ENCODE measurements at regions of chr7 and their contacts with region 1.

Region 1: DNA sequence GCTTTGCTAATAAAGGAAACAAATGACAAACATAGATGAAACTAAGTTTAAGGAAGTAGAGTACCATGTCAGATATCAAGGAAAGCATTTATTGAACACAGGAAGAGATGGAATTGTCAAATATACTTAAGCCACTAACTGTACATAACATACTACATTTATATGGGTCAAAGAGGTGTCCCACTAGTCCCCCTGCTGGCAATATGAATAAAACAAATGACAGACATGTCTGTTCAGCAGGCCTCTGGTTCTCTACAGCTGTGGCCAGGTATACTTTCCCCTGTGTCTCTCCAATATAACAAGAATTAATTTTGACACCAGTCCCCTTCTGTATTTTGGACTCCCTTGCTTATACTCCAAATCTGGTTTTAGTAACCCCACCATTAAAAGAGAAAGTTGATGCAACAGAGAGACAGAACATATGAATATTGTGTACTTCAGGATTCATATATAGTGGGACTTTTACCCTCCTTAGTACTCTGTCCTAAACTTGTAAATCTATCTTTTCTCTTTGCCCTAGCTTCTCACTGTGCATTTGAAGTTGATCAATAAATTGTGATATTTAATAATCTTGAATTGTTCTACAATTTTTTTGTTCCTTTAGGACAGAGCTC is 42.9 kb downstream of the CD36 start:
- DNase-seq: no peak
- ATAC-seq: peak; percentile 67 to 88 (median 74)
- H3K4me3 ChIP-seq: no peak overlapping the region
- H3K27ac ChIP-seq: peak overlapping the region in 7 of 10 donors; percentile 13 to 67 (median 55)
- H3K4me1 ChIP-seq: peaks cover 0 to 38% (median 12%) of the 10 kb centered on the region in 9 donors
- H3K27me3 ChIP-seq: no peaks in the 10 kb centered on the region
- CTCF ChIP-seq: peak; percentile 20 to 67 (median 52)

Region 2: GRCh38 chr7:80428161-80429054 is 253.0 kb before region 1 on chr7:
- intact Hi-C with region 1: loop called in 2 of 10 experiments (anchors 5 kb)
- DNase-seq: peak in 1 of 2 donors; percentile 47
- ATAC-seq: peak; percentile 65 to 95 (median 92)
- H3K4me3 ChIP-seq: peak overlapping the region in 2 of 10 donors; percentile 0 to 22
- H3K27ac ChIP-seq: no peak overlapping the region
- H3K4me1 ChIP-seq: peaks cover 0 to 10% (median 3%) of the 10 kb centered on the region in 9 donors
- H3K27me3 ChIP-seq: no peaks in the 10 kb centered on the region
- CTCF ChIP-seq: peak; percentile 44 to 90 (median 77)

Region 3: DNA sequence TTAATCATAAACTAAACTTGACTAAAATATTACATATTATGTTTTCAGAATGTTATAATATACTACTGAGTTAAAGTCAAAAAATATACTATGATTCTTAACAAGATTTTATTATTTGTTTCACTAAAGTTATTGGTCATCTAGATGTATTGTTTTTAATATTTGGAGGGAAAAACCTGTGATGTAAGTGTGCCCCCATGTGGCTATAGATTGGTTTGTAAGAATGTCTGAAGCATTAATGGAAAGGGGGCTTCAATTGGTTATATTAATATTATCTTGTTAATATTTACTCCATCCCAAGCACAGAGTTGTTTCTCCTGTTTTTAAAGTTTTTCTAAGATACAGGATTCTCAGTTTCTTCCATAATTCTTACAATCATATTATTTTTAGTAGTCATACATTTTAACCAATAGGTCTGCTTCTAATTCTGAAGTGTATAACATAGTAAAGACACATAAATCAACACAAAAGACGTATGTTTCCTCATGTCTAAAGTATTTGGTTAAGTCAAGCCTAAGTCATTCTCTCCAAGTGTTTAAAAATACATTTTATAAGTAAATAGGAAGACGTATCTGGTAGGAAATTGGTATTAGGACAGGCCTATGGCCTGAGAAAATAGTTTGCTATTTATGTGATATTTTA is 227.6 kb before region 1 on chr7:
- intact Hi-C with region 1: loop called in 1 of 10 experiments (anchors 5 kb)
- DNase-seq: no peak
- ATAC-seq: no peak
- H3K4me3 ChIP-seq: no peak overlapping the region
- H3K27ac ChIP-seq: no peak overlapping the region
- H3K4me1 ChIP-seq: peaks cover 0 to 5% (median 0%) of the 10 kb centered on the region in 9 donors
- H3K27me3 ChIP-seq: no peaks in the 10 kb centered on the region
- CTCF ChIP-seq: peak in 8 of 9 donors; percentile 27 to 75 (median 57)

Region 4: DNA sequence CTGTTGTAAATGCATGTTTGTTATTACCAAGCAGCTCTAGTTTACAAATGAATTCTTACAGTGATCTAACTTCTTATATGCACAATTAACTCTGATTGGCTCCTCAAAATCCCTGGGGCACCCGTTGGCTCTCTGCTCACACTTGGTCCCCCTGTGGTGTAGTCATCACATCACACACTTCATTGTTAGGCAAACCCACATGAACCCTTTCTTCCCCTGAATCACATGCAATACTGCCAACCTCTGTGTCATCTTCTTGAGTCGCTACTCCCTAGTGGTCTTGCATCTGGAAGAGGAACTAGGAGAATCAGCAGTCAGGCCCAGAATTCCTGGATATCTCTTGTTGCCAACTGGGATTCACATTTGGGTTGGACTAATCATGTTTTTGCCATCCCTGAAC is 30.2 kb after region 1 on chr7:
- intact Hi-C with region 1: no loop called
- DNase-seq: no peak
- ATAC-seq: peak in 2 of 8 donors; percentile 47 to 70
- H3K4me3 ChIP-seq: no peak overlapping the region
- H3K27ac ChIP-seq: no peak overlapping the region
- H3K4me1 ChIP-seq: no peaks in the 10 kb centered on the region
- H3K27me3 ChIP-seq: no peaks in the 10 kb centered on the region
- CTCF ChIP-seq: no peak